ENCODE measurements at regions of chr2 and their contacts with region 1.

Region 1: GRCh38 chr2:38377050-38377828 is at the start of gene ATL2:
- DNase-seq: peak; percentile 93
- ATAC-seq: peak; percentile 74
- H3K4me3 ChIP-seq: peak within 1 kb of the TSS; percentile 74
- H3K27ac ChIP-seq: peak within 1 kb of the TSS; percentile 73
- H3K4me1 ChIP-seq: peaks cover 23% of the 10 kb centered on the region
- H3K27me3 ChIP-seq: no peaks in the 10 kb centered on the region
- CTCF ChIP-seq: no peak
- total RNA-seq, gene ATL2: 65.3 and 89.4 TPM in 2 replicates

Region 2: GRCh38 chr2:38427936-38428335 is 50.7 kb after region 1 on chr2:
- CTCF ChIA-PET with region 1: no interaction called
- POLR2A ChIA-PET with region 1: no interaction called
- intact Hi-C with region 1: loop called (anchors 2 kb)
- DNase-seq: no peak
- ATAC-seq: no peak
- H3K4me3 ChIP-seq: no peak overlapping the region
- H3K27ac ChIP-seq: peak overlapping the region; percentile 55; the same call in 1 of the 2 replicates
- H3K4me1 ChIP-seq: peaks cover 27% of the 10 kb centered on the region
- H3K27me3 ChIP-seq: no peaks in the 10 kb centered on the region
- CTCF ChIP-seq: no peak

Region 3: GRCh38 chr2:38515160-38516074 is 138.2 kb after region 1 on chr2:
- CTCF ChIA-PET with region 1: no interaction called
- POLR2A ChIA-PET with region 1: no interaction called
- intact Hi-C with region 1: loop called (anchors 10 kb)
- DNase-seq: peak; percentile 85
- ATAC-seq: peak; percentile 93
- H3K4me3 ChIP-seq: peak overlapping the region; percentile 50
- H3K27ac ChIP-seq: peak overlapping the region; percentile 84
- H3K4me1 ChIP-seq: peaks cover 19% of the 10 kb centered on the region; the same call in 1 of the 2 replicates
- H3K27me3 ChIP-seq: no peaks in the 10 kb centered on the region
- CTCF ChIP-seq: no peak

Measured in PC-3 (cell line).